Heart right ventricle (tissue), 16 donors: ENCODE measurements at regions of chr18 and their contacts with region 1.

Region 1: GRCh38 chr18:30792051-30792450 is 250.5 kb downstream of the DSC3 start:
- DNase-seq: no peak
- ATAC-seq: no peak
- H3K4me3 ChIP-seq: no peak overlapping the region
- H3K27ac ChIP-seq: no peak overlapping the region
- H3K4me1 ChIP-seq: no peaks in the 10 kb centered on the region
- H3K27me3 ChIP-seq: no peaks in the 10 kb centered on the region
- CTCF ChIP-seq: no peak

Region 2: DNA sequence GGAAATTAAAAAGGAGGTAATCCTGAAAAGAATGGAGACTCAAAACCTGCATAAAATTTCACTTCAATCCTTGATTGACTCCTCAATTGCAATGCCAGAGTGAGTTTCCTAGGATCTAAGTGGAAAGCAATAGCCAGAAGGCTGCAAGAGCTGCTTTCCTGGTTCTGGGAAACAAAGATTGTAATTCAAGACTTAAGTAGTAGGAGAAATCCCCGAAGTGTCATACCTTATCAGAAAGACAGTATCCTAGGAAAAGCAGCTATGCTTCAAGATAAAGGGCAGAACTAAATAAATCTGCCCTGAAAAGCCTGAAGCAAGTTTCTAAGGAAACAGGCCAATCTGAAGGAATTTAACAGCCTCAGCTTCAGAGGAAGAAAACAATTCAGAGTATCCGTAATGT is 139.7 kb before region 1 on chr18:
- intact Hi-C with region 1: no loop called
- DNase-seq: no peak
- ATAC-seq: no peak
- H3K4me3 ChIP-seq: no peak overlapping the region
- H3K27ac ChIP-seq: no peak overlapping the region
- H3K4me1 ChIP-seq: no peaks in the 10 kb centered on the region
- H3K27me3 ChIP-seq: no peaks in the 10 kb centered on the region
- CTCF ChIP-seq: no peak

Region 3: DNA sequence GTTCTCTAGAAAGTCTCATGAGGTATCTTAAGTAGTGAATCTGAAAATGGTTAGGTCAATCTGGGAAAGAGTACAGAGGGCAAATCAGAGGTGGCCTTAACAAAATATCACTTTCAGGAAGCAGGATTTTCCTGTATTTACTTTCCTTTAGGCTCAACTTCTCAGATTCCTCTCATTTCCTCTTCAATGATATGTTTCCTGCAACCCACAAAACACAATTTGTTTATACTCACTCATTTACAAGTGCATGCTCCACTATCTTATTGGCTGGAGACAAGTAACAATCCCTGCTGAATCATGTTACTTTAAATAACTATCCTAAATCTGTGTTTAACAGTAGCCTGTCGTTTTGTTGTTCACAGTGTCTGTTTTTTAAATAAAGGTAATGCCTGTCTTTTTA is 22.4 kb after region 1 on chr18:
- intact Hi-C with region 1: loop called in 1 of 10 experiments (anchors 2 kb)
- DNase-seq: no peak
- ATAC-seq: peak in 2 of 8 donors; percentile 44 to 67
- H3K4me3 ChIP-seq: no peak overlapping the region
- H3K27ac ChIP-seq: no peak overlapping the region
- H3K4me1 ChIP-seq: no peaks in the 10 kb centered on the region
- H3K27me3 ChIP-seq: no peaks in the 10 kb centered on the region
- CTCF ChIP-seq: no peak

Region 4: DNA sequence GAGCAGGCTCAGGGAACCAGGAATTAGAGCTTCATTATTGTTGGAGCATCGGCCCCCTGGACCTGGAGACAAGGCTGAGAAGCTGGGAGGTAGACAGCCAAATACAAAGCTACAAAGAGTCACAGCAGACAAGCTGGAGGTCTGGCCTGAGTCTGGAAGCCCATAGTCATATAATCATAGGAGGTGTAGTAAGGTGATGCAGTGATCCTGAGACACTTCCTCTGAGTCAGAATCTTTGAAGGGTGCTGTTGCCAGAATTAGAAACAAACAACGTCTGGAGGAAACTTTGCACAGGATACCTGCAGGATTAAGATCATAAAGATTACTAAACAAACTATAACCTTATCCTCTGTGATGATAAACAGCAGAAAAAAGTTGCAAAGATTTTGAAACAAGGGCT is 36.6 kb after region 1 on chr18:
- intact Hi-C with region 1: no loop called
- DNase-seq: no peak
- ATAC-seq: no peak
- H3K4me3 ChIP-seq: no peak overlapping the region
- H3K27ac ChIP-seq: no peak overlapping the region
- H3K4me1 ChIP-seq: no peaks in the 10 kb centered on the region
- H3K27me3 ChIP-seq: no peaks in the 10 kb centered on the region
- CTCF ChIP-seq: no peak

Region 5: GRCh38 chr18:30852980-30853379 is 60.9 kb after region 1 on chr18:
- intact Hi-C with region 1: no loop called
- DNase-seq: no peak
- ATAC-seq: no peak
- H3K4me3 ChIP-seq: no peak overlapping the region
- H3K27ac ChIP-seq: no peak overlapping the region
- H3K4me1 ChIP-seq: no peaks in the 10 kb centered on the region
- H3K27me3 ChIP-seq: no peaks in the 10 kb centered on the region
- CTCF ChIP-seq: no peak